ENCODE measurements at regions of chr6 and their contacts with region 1.

Region 1: GRCh38 chr6:161370880-161371279 is 97.0 kb upstream of the AGPAT4 start:
- DNase-seq: peak; percentile 43 to 84 (median 61)
- ATAC-seq: peak; percentile 90
- H3K4me3 ChIP-seq: no peak overlapping the region
- H3K4me3 Mint-ChIP-seq: no peak overlapping the region
- H3K27ac ChIP-seq: no peak overlapping the region
- H3K27ac Mint-ChIP-seq: no peak overlapping the region
- H3K4me1 ChIP-seq: peaks cover 5% of the 10 kb centered on the region
- H3K4me1 Mint-ChIP-seq: no peaks in the 10 kb centered on the region
- H3K27me3 ChIP-seq: no peaks in the 10 kb centered on the region
- H3K27me3 Mint-ChIP-seq: no peaks in the 10 kb centered on the region
- CTCF ChIP-seq: peak; percentile 92

Region 2: GRCh38 chr6:160733050-160733646 is 637.7 kb before region 1 on chr6:
- CTCF ChIA-PET with region 1: interaction called, 6 read pairs
- POLR2A ChIA-PET with region 1: no interaction called
- intact Hi-C with region 1: loop called in 1 of 2 experiments (anchors 2 kb)
- DNase-seq: peak in 4 of 14 experiments; percentile 17 to 57 (median 40)
- ATAC-seq: no peak
- H3K4me3 ChIP-seq: no peak overlapping the region
- H3K4me3 Mint-ChIP-seq: no peak overlapping the region
- H3K27ac ChIP-seq: no peak overlapping the region
- H3K27ac Mint-ChIP-seq: no peak overlapping the region
- H3K4me1 ChIP-seq: no peaks in the 10 kb centered on the region
- H3K4me1 Mint-ChIP-seq: no peaks in the 10 kb centered on the region
- H3K27me3 ChIP-seq: peaks cover 0 to 5% of the 10 kb centered on the region in 2 experiments
- H3K27me3 Mint-ChIP-seq: peaks cover 18% of the 10 kb centered on the region
- CTCF ChIP-seq: peak; percentile 33

Region 3: DNA sequence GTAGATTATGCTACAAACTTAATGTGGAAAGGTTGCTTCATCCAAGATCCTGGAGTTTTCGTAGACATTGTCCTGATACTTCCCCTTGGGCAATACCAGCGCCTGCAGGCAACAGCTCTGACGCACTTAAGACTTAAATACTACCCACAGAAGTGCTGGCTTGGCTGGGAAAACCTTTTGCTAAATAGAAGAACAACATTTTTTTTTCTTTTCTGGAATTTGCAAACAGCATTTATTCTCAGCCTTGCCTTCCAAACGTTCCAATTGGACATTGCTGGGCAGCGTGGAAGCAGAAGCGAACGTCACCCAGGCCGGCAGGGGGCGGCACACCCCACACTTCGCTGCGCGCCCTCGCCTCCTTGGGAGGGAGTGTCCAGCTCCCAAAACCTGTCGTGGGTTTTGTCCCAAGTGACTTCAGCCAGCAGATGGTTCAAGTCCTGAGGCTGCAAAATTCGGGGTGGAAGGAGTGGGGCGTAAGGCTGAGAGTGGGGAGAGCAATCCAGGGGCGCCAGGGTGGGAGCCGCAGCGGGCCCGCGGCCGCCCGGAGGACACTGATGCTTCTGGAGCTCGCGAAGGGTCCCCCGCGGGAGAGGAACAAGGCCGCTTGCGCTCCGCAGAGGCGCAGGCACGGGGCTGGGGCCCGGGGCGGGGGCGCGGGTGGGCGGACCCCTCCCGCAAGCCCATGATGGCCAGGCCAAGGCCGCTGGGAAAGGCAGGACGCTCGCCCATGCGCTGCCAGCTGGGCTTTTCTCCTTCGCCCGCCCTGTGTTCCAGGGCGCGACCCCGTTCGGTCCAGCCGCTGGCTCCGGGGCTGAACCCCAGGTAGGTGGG is 440.1 kb before region 1 on chr6:
- CTCF ChIA-PET with region 1: interaction called, 65 read pairs
- POLR2A ChIA-PET with region 1: interaction called, 5 read pairs
- intact Hi-C with region 1: loop called (anchors 1 kb)
- DNase-seq: peak; percentile 17 to 75 (median 47)
- ATAC-seq: peak; percentile 39
- H3K4me3 ChIP-seq: peak overlapping the region; percentile 43
- H3K4me3 Mint-ChIP-seq: no peak overlapping the region
- H3K27ac ChIP-seq: no peak overlapping the region
- H3K27ac Mint-ChIP-seq: no peak overlapping the region
- H3K4me1 ChIP-seq: peaks cover 11% of the 10 kb centered on the region
- H3K4me1 Mint-ChIP-seq: no peaks in the 10 kb centered on the region
- H3K27me3 ChIP-seq: peaks cover 0 to 21% of the 10 kb centered on the region in 2 experiments
- H3K27me3 Mint-ChIP-seq: peaks cover 49% of the 10 kb centered on the region
- CTCF ChIP-seq: peak; percentile 77

Region 4: DNA sequence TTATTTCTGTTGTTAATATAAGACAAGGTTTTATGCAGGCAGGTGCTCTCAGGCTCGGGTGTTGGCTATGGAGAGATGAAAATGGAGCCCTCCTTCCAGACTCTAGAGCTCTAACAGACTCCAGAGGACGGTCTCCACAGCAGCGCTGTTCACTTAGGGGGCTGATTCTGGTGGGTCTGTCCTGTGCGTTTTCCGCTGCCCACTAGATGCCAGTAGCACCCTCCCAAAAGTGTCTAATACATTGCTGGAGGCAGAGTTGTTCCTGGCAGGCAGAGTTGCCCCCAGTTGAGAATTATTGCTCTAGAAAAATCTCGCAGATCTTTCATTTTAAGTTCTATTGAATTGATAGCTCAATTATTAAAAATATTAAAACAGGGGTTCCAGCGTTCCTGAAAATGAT is 269.4 kb before region 1 on chr6:
- CTCF ChIA-PET with region 1: interaction called, 3 read pairs
- POLR2A ChIA-PET with region 1: no interaction called
- intact Hi-C with region 1: loop called (anchors 2 to 5 kb)
- DNase-seq: no peak
- ATAC-seq: no peak
- H3K4me3 ChIP-seq: no peak overlapping the region
- H3K4me3 Mint-ChIP-seq: no peak overlapping the region
- H3K27ac ChIP-seq: no peak overlapping the region
- H3K27ac Mint-ChIP-seq: no peak overlapping the region
- H3K4me1 ChIP-seq: no peaks in the 10 kb centered on the region
- H3K4me1 Mint-ChIP-seq: no peaks in the 10 kb centered on the region
- H3K27me3 ChIP-seq: no peaks in the 10 kb centered on the region
- H3K27me3 Mint-ChIP-seq: no peaks in the 10 kb centered on the region
- CTCF ChIP-seq: no peak

Region 5: DNA sequence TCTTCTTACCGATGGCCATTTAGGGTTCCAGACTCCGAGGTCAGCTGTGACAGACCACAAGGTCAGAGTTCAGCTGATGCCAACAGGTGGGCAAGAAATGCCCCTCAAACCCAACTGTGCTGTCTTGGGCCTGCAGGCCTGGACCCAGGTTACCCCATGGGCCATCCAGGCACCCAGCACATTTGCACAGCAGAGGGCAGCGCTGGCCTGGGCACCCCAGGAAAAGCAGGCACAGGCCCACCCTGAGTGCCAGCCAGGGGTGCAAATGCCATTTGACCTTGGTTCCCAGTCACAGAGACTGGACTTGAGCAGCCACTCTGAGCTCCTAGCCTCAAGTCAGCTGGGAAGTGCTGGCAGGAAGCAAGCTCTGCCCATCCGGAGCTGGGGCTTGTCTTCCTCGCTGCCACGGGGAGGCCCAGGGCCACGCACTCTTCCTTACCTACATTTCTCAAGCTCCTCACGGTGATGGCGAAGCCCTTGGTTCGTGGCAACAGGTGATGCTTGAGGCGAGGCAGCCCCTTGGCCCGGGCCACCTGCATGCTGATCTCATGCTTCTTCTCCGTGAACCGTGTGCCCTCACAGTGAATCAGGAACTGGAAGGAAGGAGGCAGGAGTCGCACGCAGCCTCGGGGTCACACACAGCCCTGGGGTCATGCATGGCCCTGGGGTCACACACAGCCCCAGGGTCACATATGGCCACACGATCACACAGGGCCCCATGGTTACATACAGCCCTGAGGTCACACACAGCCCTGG is 217.8 kb before region 1 on chr6:
- CTCF ChIA-PET with region 1: interaction called, 4 read pairs
- POLR2A ChIA-PET with region 1: no interaction called
- intact Hi-C with region 1: loop called (anchors 2 to 5 kb)
- DNase-seq: peak in 1 of 14 experiments; percentile 18
- ATAC-seq: no peak
- H3K4me3 ChIP-seq: no peak overlapping the region
- H3K4me3 Mint-ChIP-seq: no peak overlapping the region
- H3K27ac ChIP-seq: no peak overlapping the region
- H3K27ac Mint-ChIP-seq: no peak overlapping the region
- H3K4me1 ChIP-seq: no peaks in the 10 kb centered on the region
- H3K4me1 Mint-ChIP-seq: no peaks in the 10 kb centered on the region
- H3K27me3 ChIP-seq: no peaks in the 10 kb centered on the region
- H3K27me3 Mint-ChIP-seq: no peaks in the 10 kb centered on the region
- CTCF ChIP-seq: no peak

Region 6: DNA sequence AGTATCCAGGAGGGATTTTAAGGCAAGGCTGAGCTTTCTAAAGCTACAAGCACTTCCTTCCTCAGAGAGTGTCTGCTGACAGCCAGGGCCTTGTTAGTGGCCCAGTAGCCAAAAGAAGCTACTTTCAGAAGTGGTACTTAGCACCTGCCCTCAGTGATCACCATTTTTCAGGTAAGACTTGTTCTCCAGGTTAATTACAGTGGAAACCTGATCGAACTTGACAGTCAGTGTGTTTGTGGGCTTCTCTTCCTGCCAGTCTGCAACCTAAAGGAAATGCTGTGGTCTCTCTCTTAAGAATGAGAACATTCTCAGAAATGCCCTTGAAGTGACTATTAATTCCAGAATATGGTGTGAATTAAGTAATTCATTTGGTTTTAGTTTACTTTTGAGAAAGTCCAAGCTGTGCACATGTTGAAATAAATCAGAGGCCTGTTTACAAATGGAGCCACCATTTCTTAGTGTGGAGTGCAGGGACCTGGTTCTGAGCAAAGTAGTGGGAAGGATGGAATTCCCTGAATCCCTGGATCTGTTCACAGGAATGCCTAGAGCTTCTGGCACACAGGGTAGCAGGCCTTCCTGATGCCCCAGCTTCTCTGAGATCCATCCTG is 88.2 kb after region 1 on chr6:
- CTCF ChIA-PET with region 1: no interaction called
- POLR2A ChIA-PET with region 1: no interaction called
- intact Hi-C with region 1: no loop called
- DNase-seq: peak in 1 of 14 experiments; percentile 18
- ATAC-seq: no peak
- H3K4me3 ChIP-seq: no peak overlapping the region
- H3K4me3 Mint-ChIP-seq: no peak overlapping the region
- H3K27ac ChIP-seq: no peak overlapping the region
- H3K27ac Mint-ChIP-seq: no peak overlapping the region
- H3K4me1 ChIP-seq: peaks cover 8% of the 10 kb centered on the region
- H3K4me1 Mint-ChIP-seq: no peaks in the 10 kb centered on the region
- H3K27me3 ChIP-seq: no peaks in the 10 kb centered on the region
- H3K27me3 Mint-ChIP-seq: no peaks in the 10 kb centered on the region
- CTCF ChIP-seq: no peak